PC-3 (cell line): ENCODE measurements at regions of chr16 and their contacts with region 1.

Region 1: DNA sequence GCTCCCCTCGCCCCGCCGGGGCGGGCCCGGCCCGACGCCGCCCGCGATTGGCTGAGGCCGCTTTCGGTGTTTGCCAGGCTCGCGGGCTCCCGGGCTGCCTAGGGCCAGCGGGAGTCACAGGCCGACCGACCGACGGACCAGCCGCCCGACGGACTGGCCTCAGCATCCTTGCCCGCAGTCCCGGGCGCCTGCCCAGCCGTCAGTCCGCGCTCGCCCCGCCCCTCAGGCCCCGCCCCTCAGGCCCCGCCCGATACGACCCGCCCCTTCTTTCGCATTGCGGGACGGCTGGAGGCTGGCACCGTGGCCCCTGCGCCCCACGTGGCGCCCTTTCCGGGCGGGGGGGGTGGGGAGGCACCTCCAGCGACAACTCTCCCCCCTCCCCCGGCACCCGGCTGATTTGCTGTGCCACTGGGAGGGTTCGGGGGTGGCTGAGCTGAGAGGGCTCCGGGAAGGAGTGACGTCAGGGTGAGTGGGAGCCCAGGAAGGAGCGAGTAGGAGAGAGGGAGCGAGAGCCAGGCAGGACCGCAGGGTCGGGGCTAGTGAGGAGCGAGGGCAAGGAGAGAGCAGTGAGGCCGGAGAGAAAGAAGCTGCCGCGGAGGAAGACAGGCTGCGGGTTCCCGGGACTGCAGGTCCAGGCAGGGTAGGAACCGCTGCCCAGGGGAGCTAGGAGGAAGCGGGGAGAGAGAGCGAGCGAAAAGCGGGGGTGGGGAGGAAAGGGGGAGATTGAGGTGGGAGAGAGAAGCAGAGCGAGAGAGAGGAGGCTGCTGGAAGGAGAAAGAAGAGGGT is at the start of gene ASPHD1:
- DNase-seq: peak; percentile 57
- ATAC-seq: peak; percentile 61
- H3K4me3 ChIP-seq: peak within 1 kb of the TSS; percentile 66
- H3K27ac ChIP-seq: peak within 1 kb of the TSS; percentile 45
- H3K4me1 ChIP-seq: peaks cover 7% of the 10 kb centered on the region; the same call in 1 of the 2 replicates
- H3K27me3 ChIP-seq: no peaks in the 10 kb centered on the region
- CTCF ChIP-seq: no peak
- total RNA-seq, gene ASPHD1: 2.0 and 3.9 TPM in 2 replicates

Region 2: GRCh38 chr16:29951625-29952365 is 51.5 kb after region 1 on chr16:
- CTCF ChIA-PET with region 1: no interaction called
- POLR2A ChIA-PET with region 1: no interaction called
- intact Hi-C with region 1: no loop called
- DNase-seq: no peak
- ATAC-seq: no peak
- H3K4me3 ChIP-seq: no peak overlapping the region
- H3K27ac ChIP-seq: no peak overlapping the region
- H3K4me1 ChIP-seq: no peaks in the 10 kb centered on the region
- H3K27me3 ChIP-seq: no peaks in the 10 kb centered on the region
- CTCF ChIP-seq: no peak

Region 3: GRCh38 chr16:29973384-29974246 is 73.3 kb after region 1 on chr16 and contains the start of gene TAOK2:
- CTCF ChIA-PET with region 1: interaction called, 15 read pairs
- POLR2A ChIA-PET with region 1: interaction called, 6 read pairs
- intact Hi-C with region 1: no loop called
- DNase-seq: peak; percentile 95
- ATAC-seq: peak; percentile 99
- H3K4me3 ChIP-seq: peak within 1 kb of the TSS; percentile 98
- H3K27ac ChIP-seq: peak within 1 kb of the TSS; percentile 37; the same call in 1 of the 2 replicates
- H3K4me1 ChIP-seq: peaks cover 22% of the 10 kb centered on the region
- H3K27me3 ChIP-seq: no peaks in the 10 kb centered on the region
- CTCF ChIP-seq: no peak
- total RNA-seq, gene TAOK2: 34.1 and 47.4 TPM in 2 replicates